B cell (primary cell): ENCODE measurements at regions of chr6 and their contacts with region 1.

Region 1: DNA sequence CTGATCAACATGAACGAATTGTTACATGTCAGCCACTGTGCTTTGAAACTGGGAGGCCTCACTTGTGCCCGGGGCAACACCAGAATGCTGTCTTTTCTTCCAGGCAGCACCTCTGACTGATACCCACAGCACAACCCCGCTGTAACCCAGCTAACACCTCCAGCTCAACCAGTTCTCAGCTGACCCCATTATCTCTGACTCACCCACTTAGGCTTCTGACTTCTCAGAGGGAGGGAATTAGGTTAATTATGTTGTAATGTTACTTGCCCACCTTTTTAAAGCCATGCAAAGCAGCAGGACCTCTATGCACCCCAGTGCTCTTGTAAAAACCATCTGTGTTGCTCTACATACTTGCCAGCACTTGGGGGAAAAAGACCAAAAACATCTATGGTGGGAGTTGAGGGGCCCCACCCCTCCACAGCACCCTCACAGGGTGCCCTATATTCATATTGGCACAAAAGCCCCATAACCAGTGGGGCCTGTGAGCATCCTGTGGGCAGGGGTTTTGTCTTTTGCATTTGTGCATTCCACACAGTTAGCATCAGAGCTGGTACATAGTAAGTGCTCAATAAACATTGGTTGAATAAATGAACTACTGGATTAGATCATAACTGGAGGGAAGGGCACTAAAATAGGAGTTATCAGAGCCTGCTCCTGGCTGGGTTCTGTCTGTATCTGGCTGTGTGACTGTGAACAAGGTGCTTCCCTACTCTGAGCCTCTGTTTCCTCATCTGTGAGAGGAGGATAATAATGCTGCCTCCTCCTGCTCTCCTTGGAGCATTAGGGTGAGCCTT is 22.3 kb downstream of the BNIP5 start:
- DNase-seq: no peak
- ATAC-seq: no peak
- H3K4me3 ChIP-seq: no peak overlapping the region
- H3K4me3 Mint-ChIP-seq: no peak overlapping the region
- H3K27ac ChIP-seq: no peak overlapping the region
- H3K27ac Mint-ChIP-seq: no peak overlapping the region
- H3K4me1 ChIP-seq: peaks cover 10 to 20% of the 10 kb centered on the region in 2 donors
- H3K4me1 Mint-ChIP-seq: peaks cover 22% of the 10 kb centered on the region
- H3K27me3 ChIP-seq: no peaks in the 10 kb centered on the region
- H3K27me3 Mint-ChIP-seq: no peaks in the 10 kb centered on the region
- CTCF ChIP-seq: no peak

Region 2: GRCh38 chr6:36292170-36292569 is 22.2 kb before region 1 on chr6:
- CTCF ChIA-PET with region 1: no interaction called
- POLR2A ChIA-PET with region 1: no interaction called
- intact Hi-C with region 1: no loop called
- DNase-seq: no peak
- ATAC-seq: no peak
- H3K4me3 ChIP-seq: no peak overlapping the region
- H3K4me3 Mint-ChIP-seq: no peak overlapping the region
- H3K27ac ChIP-seq: no peak overlapping the region
- H3K27ac Mint-ChIP-seq: no peak overlapping the region
- H3K4me1 ChIP-seq: no peaks in the 10 kb centered on the region
- H3K4me1 Mint-ChIP-seq: no peaks in the 10 kb centered on the region
- H3K27me3 ChIP-seq: peaks cover 0 to 10% (median 4%) of the 10 kb centered on the region in 4 experiments
- H3K27me3 Mint-ChIP-seq: peaks cover 27% of the 10 kb centered on the region
- CTCF ChIP-seq: no peak

Region 3: GRCh38 chr6:36302227-36302976 is 12.0 kb before region 1 on chr6:
- CTCF ChIA-PET with region 1: interaction called, 24 read pairs
- POLR2A ChIA-PET with region 1: no interaction called
- intact Hi-C with region 1: no loop called
- DNase-seq: peak; percentile 94
- ATAC-seq: peak; percentile 95
- H3K4me3 ChIP-seq: no peak overlapping the region
- H3K4me3 Mint-ChIP-seq: no peak overlapping the region
- H3K27ac ChIP-seq: no peak overlapping the region
- H3K27ac Mint-ChIP-seq: peak overlapping the region; percentile 57
- H3K4me1 ChIP-seq: no peaks in the 10 kb centered on the region
- H3K4me1 Mint-ChIP-seq: peaks cover 5% of the 10 kb centered on the region
- H3K27me3 ChIP-seq: peaks cover 0 to 6% (median 1%) of the 10 kb centered on the region in 4 experiments
- H3K27me3 Mint-ChIP-seq: peaks cover 23% of the 10 kb centered on the region
- CTCF ChIP-seq: peak; percentile 97

Region 4: DNA sequence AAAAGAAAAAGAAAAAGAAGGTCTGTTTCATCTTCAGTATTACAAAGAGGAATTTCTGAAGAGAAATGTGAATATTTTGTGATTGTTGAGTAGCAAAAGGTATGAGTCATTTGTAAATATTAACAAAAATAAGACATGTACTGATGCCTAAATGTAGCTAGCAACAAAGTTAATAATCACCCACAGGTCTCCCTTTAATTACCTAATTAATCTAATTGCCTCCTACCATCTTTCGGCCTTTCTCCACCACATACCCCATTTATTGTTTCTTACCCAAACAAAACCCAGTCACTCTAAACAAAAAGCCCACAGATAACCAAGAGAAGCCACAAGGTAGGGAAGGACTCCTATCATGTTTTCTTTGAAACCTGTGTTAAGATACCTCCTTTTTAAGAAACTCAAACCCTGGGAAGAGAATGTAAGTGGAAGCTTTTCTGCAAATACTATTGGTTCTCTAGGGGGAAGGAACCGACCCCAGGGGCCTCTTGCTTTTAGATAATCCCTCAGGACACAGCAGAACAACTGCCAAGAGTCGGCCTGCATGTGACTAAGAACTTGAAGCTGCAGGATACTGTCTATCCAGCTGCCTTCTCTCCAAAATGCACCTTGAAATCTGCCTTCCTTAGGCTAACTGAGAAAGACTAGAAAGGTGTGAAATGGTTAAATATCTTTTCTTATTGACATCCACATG is 249.0 kb after region 1 on chr6:
- CTCF ChIA-PET with region 1: no interaction called
- POLR2A ChIA-PET with region 1: no interaction called
- intact Hi-C with region 1: no loop called
- DNase-seq: no peak
- ATAC-seq: no peak
- H3K4me3 ChIP-seq: no peak overlapping the region
- H3K4me3 Mint-ChIP-seq: no peak overlapping the region
- H3K27ac ChIP-seq: no peak overlapping the region
- H3K27ac Mint-ChIP-seq: no peak overlapping the region
- H3K4me1 ChIP-seq: peaks cover 5 to 6% of the 10 kb centered on the region in 2 donors
- H3K4me1 Mint-ChIP-seq: peaks cover 11% of the 10 kb centered on the region
- H3K27me3 ChIP-seq: no peaks in the 10 kb centered on the region
- H3K27me3 Mint-ChIP-seq: peaks cover 4% of the 10 kb centered on the region
- CTCF ChIP-seq: no peak